Naive thymus-derived CD4-positive, alpha-beta T cell (primary cell): ENCODE measurements at regions of chrX and their contacts with region 1.

Region 1: GRCh38 chrX:104098151-104098808 is 14.0 kb upstream of the ZCCHC18 start:
- DNase-seq: peak in 7 of 9 donors; percentile 30 to 65 (median 54)
- ATAC-seq: peak; percentile 81
- H3K4me3 ChIP-seq: no peak overlapping the region
- H3K4me3 Mint-ChIP-seq: no peak overlapping the region
- H3K27ac ChIP-seq: no peak overlapping the region
- H3K27ac Mint-ChIP-seq: no peak overlapping the region
- H3K4me1 ChIP-seq: no peaks in the 10 kb centered on the region
- H3K4me1 Mint-ChIP-seq: no peaks in the 10 kb centered on the region
- H3K27me3 ChIP-seq: no peaks in the 10 kb centered on the region
- H3K27me3 Mint-ChIP-seq: peaks cover 0 to 27% (median 0%) of the 10 kb centered on the region in 5 donors

Region 2: DNA sequence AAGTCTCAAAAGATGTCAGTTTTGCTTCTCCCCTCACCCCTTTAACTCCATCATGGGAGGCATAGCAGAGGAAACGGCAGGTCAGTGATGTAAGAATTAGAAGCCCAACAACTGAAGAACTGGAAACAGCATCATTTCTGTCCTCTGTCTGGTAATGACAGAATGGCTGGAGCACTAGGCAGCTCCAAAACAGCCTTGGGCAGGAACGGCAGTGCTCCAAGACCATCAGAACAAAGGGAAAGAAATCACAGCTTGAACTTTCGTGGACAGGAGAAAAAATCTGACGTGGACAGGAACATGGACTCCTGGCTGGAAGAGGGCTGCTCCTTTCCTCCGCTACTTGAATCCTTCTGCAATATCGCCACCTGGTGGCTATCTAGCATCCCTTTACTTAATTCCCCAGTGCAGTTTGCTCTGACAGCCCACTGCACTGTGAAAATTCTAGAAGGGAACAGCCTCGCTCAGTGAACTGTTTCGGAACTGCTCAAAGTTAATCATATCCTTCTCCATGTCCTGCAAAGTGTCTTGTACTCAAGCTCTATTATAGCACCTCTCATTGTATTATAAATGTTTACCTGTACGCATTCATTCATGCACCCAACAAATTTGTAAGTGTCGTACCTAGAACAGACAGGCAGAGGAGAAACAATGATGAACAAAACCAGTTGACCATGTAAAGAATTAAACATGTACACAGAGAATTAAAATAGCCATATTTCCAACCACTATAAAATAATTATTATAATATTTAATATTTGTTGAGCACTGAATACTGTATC is 38.1 kb after region 1 on chrX:
- CTCF ChIA-PET with region 1: interaction called, 22 read pairs
- POLR2A ChIA-PET with region 1: no interaction called
- intact Hi-C with region 1: loop called (anchors 1 kb)
- DNase-seq: peak in 8 of 9 donors; percentile 28 to 62 (median 49)
- ATAC-seq: peak; percentile 81
- H3K4me3 ChIP-seq: no peak overlapping the region
- H3K4me3 Mint-ChIP-seq: peak overlapping the region in 1 of 10 donors; percentile 25
- H3K27ac ChIP-seq: no peak overlapping the region
- H3K27ac Mint-ChIP-seq: no peak overlapping the region
- H3K4me1 ChIP-seq: peaks cover 0 to 6% of the 10 kb centered on the region in 2 donors
- H3K4me1 Mint-ChIP-seq: peaks cover 13 to 31% (median 21%) of the 10 kb centered on the region in 7 donors
- H3K27me3 ChIP-seq: no peaks in the 10 kb centered on the region
- H3K27me3 Mint-ChIP-seq: no peaks in the 10 kb centered on the region

Region 3: GRCh38 chrX:104270920-104271512 is 172.7 kb after region 1 on chrX:
- CTCF ChIA-PET with region 1: no interaction called
- POLR2A ChIA-PET with region 1: no interaction called
- intact Hi-C with region 1: loop called in 1 of 2 experiments (anchors 1 kb)
- DNase-seq: peak in 3 of 9 donors; percentile 1 to 10 (median 4)
- ATAC-seq: no peak
- H3K4me3 ChIP-seq: no peak overlapping the region
- H3K4me3 Mint-ChIP-seq: peak overlapping the region in 8 of 10 donors; percentile 3 to 70 (median 44)
- H3K27ac ChIP-seq: no peak overlapping the region
- H3K27ac Mint-ChIP-seq: no peak overlapping the region
- H3K4me1 ChIP-seq: no peaks in the 10 kb centered on the region
- H3K4me1 Mint-ChIP-seq: peaks cover 0 to 5% (median 0%) of the 10 kb centered on the region in 7 donors
- H3K27me3 ChIP-seq: no peaks in the 10 kb centered on the region
- H3K27me3 Mint-ChIP-seq: peaks cover 0 to 20% (median 16%) of the 10 kb centered on the region in 5 donors